Dendritic cell treated with granulocyte-macrophage colony-stimulating factor and Interleukin-4, amounts not matched to agents 40 ng/mL and 50 ng/mL, for 4 days (primary cell): ENCODE measurements at regions of chr11 and their contacts with region 1.

Region 1: DNA sequence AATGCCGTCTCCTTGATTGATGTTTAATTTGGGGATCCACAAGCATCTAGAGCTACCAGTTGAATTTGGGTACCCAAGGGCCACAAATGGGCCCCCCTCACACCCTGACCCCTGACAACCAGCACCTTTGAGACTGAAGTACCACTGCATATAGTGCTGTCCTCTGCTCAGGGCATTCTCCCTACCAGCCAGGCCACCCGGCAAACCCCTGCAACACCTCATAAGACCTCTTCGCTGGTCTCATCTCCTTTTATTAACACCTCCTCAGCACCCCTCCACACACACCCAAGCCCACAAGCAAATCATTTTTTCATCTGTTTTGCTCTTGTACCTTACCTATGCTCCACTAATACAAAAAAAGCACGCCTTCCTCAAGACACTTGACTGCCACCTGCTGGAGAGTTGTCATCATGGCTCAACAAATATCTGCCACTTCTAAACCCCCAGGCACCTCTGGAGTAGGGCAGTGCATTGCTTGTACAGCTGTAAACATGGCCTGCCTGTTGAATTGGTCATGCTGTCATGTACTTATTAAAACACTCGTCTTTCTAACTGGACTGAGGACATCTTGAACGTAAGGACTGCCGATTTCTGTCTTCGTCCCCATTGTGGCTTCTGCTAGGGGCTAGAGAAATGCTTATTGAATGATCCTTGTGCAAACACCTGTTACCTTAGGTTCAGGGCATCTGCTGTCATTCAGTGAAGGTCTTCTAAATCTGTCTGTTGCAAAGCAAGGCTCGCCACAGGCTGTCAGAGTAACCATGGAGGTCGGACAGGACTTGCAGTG is 66.5 kb downstream of the BMAL1 start:
- H3K4me3 Mint-ChIP-seq: no peak overlapping the region
- H3K27ac Mint-ChIP-seq: no peak overlapping the region
- H3K4me1 Mint-ChIP-seq: peaks cover 68% of the 10 kb centered on the region
- H3K27me3 Mint-ChIP-seq: no peaks in the 10 kb centered on the region

Region 2: GRCh38 chr11:13249996-13250395 is 94.1 kb before region 1 on chr11:
- intact Hi-C with region 1: loop called (anchors 5 kb)
- H3K4me3 Mint-ChIP-seq: no peak overlapping the region
- H3K27ac Mint-ChIP-seq: no peak overlapping the region
- H3K4me1 Mint-ChIP-seq: no peaks in the 10 kb centered on the region
- H3K27me3 Mint-ChIP-seq: peaks cover 12% of the 10 kb centered on the region

Region 3: DNA sequence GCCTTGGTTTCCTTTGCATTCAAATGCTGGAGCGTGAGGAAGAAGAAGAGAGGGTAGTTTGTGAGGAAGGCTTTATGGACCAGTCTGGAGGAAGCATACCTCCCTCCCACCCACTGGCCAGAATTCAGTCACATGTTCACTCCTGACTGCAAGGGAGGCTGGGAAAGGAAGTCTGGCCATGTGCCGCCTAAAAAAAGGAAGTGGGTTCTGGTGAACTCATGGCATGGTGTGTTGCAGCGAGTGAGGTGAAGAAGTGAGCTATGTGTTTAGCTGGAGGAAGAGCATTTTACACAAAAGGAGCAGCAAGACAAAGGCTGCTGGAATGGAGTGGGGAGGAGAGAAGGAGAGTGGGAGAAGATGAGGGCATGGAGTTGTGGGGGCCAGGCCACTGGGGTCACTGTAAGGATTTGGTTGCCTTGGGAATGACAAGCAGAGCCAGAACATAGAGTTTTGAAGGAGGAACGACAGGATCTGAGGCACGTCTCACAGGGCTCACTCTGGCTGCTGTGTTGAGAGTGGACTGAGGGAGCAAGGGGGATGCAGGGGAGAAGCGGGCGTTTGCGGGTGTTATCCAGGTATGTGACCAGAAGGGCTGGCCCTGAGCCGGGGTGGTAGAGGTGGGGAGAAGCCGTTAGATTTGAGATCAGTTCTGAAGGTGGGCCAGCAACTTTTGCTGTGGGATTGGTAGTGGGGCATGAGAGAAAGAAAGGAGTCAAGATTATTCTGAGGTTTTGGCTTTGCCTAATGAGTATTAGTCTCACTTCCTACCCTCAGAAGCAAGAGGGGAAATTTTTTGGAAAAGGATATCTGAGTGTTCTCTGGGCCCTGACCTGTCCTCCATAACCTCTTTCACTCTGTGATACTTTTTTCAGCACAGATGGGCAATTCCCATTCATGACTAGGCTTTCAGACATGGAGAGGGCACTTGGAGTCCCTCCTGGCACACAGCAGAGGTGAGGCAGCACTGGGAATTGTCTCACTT is 40.2 kb before region 1 on chr11:
- intact Hi-C with region 1: no loop called
- H3K4me3 Mint-ChIP-seq: peak overlapping the region; percentile 11
- H3K27ac Mint-ChIP-seq: peak overlapping the region; percentile 69
- H3K4me1 Mint-ChIP-seq: peaks cover 58% of the 10 kb centered on the region
- H3K27me3 Mint-ChIP-seq: no peaks in the 10 kb centered on the region